ENCODE measurements at regions of chrX and their contacts with region 1.

Region 1: GRCh38 chrX:1580735-1581531 is 10.5 kb upstream of the AKAP17A start:
- DNase-seq: peak in 1 of 5 donors; percentile 56
- ATAC-seq: peak in 2 of 4 donors; percentile 52 to 61
- H3K4me3 ChIP-seq: no peak overlapping the region
- H3K27ac ChIP-seq: no peak overlapping the region
- H3K4me1 ChIP-seq: peaks cover 0 to 7% (median 0%) of the 10 kb centered on the region in 12 donors
- H3K27me3 ChIP-seq: no peaks in the 10 kb centered on the region
- CTCF ChIP-seq: peak; percentile 67 to 89 (median 78)
- POLR2A ChIP-seq: no peak

Region 2: GRCh38 chrX:1462596-1463251 is 118.2 kb before region 1 on chrX:
- intact Hi-C with region 1: loop called in 6 of 10 experiments (anchors 5 to 10 kb)
- DNase-seq: peak in 4 of 5 donors; percentile 43 to 58 (median 54)
- ATAC-seq: peak; percentile 57 to 94 (median 88)
- H3K4me3 ChIP-seq: no peak overlapping the region
- H3K27ac ChIP-seq: peak overlapping the region; percentile 17 to 94 (median 74)
- H3K4me1 ChIP-seq: peaks cover 0 to 50% (median under 1%) of the 10 kb centered on the region in 12 donors
- H3K27me3 ChIP-seq: peaks cover 0 to 8% (median 2%) of the 10 kb centered on the region in 9 donors
- CTCF ChIP-seq: no peak
- POLR2A ChIP-seq: no peak

Region 3: GRCh38 chrX:1468250-1468772 is 112.6 kb before region 1 on chrX:
- intact Hi-C with region 1: loop called in 2 of 10 experiments (anchors 5 to 10 kb)
- DNase-seq: peak in 3 of 5 donors; percentile 4 to 54 (median 25)
- ATAC-seq: no peak
- H3K4me3 ChIP-seq: peak overlapping the region in 1 of 12 donors; percentile 8
- H3K27ac ChIP-seq: peak overlapping the region in 2 of 12 donors; percentile 60 to 83
- H3K4me1 ChIP-seq: peaks cover 0 to 57% (median 0%) of the 10 kb centered on the region in 12 donors
- H3K27me3 ChIP-seq: peaks cover 0 to 15% (median 4%) of the 10 kb centered on the region in 9 donors
- CTCF ChIP-seq: no peak
- POLR2A ChIP-seq: no peak

Region 4: GRCh38 chrX:1537035-1537715 is 43.8 kb before region 1 on chrX and contains the start of gene P2RY8:
- intact Hi-C with region 1: loop called in 1 of 10 experiments (anchors 5 kb)
- DNase-seq: peak; percentile 49 to 85 (median 61)
- ATAC-seq: peak; percentile 58 to 85 (median 74)
- H3K4me3 ChIP-seq: peak within 1 kb of the TSS; percentile 4 to 69 (median 51)
- H3K27ac ChIP-seq: peak within 1 kb of the TSS in 10 of 12 donors; percentile 50 to 95 (median 70)
- H3K4me1 ChIP-seq: peaks cover 0 to 17% (median 0%) of the 10 kb centered on the region in 12 donors
- H3K27me3 ChIP-seq: peaks cover 0 to 6% (median 0%) of the 10 kb centered on the region in 9 donors
- CTCF ChIP-seq: no peak
- POLR2A ChIP-seq: no peak
- total RNA-seq, gene P2RY8: 0.62 to 10.5 (median 2.3) TPM

Region 5: DNA sequence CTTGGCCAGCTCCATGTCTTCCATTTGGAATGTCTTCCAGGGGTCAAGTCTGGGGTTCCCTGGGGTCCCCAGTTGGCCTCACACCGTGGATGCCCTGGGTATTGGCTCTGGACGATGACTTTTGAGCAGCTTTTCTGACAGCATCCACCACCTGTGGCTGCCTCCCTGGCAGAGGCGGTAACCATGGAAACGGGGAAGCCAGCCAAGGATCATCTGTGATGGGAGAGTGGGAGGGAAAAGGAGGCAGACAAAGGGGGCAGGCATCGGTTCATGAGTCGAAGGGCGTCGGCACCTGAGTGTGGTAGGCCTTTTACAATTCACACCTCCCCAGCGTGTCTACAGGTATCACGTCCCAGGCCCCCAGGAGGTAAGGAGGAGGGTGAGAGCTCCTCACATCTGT is 186.1 kb after region 1 on chrX:
- intact Hi-C with region 1: no loop called
- DNase-seq: no peak
- ATAC-seq: no peak
- H3K4me3 ChIP-seq: no peak overlapping the region
- H3K27ac ChIP-seq: no peak overlapping the region
- H3K4me1 ChIP-seq: no peaks in the 10 kb centered on the region
- H3K27me3 ChIP-seq: no peaks in the 10 kb centered on the region
- CTCF ChIP-seq: no peak
- POLR2A ChIP-seq: no peak

Measured in heart left ventricle (tissue), 16 donors.